Calu3 (cell line): ENCODE measurements at regions of chr12 and their contacts with region 1.

Region 1: GRCh38 chr12:87827638-87828264 is 201.4 kb downstream of the C12orf50 start:
- DNase-seq: no peak
- H3K4me3 Mint-ChIP-seq: no peak overlapping the region
- H3K27ac Mint-ChIP-seq: peak overlapping the region; percentile 43
- H3K4me1 Mint-ChIP-seq: peaks cover 42% of the 10 kb centered on the region
- H3K27me3 Mint-ChIP-seq: no peaks in the 10 kb centered on the region
- CTCF ChIP-seq: no peak

Region 2: GRCh38 chr12:87687362-87687761 is 140.4 kb before region 1 on chr12:
- CTCF ChIA-PET with region 1: no interaction called
- intact Hi-C with region 1: loop called (anchors 5 kb)
- DNase-seq: peak; percentile 50
- H3K4me3 Mint-ChIP-seq: no peak overlapping the region
- H3K27ac Mint-ChIP-seq: peak overlapping the region; percentile 66
- H3K4me1 Mint-ChIP-seq: peaks cover 19% of the 10 kb centered on the region
- H3K27me3 Mint-ChIP-seq: no peaks in the 10 kb centered on the region
- CTCF ChIP-seq: no peak

Region 3: DNA sequence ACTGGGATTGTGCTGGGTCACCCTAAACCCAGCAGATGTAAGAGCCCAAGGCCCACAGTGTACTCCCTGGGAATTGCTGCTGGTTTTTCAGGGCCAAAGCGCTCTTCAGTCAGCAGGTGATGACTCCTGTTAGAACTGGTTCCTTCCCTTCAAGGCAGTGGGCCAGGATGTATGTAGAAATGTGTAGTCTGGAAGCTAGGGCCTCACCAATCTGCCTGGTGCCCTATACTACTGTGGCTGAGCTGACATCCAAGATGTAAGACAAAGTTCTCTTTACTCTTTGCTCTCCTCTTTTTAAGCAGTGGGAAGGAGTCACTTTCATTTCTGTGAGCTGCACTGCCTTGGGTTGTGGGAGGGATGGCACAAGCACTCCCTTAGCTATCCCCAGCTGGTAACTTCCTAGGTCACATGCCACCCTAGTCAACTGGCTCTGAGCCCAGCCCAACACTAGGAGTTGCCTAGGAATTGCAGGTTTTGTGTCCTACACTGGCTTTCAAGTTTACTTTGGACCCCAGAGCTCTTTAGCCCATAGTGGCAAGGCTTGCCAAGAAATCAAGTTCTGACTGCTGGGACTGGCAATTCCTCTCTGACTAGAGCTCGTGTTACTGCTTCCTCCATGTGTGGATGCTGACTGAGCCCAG is 47.8 kb before region 1 on chr12:
- CTCF ChIA-PET with region 1: no interaction called
- intact Hi-C with region 1: no loop called
- DNase-seq: no peak
- H3K4me3 Mint-ChIP-seq: no peak overlapping the region
- H3K27ac Mint-ChIP-seq: no peak overlapping the region
- H3K4me1 Mint-ChIP-seq: peaks cover 18% of the 10 kb centered on the region
- H3K27me3 Mint-ChIP-seq: no peaks in the 10 kb centered on the region
- CTCF ChIP-seq: no peak

Region 4: DNA sequence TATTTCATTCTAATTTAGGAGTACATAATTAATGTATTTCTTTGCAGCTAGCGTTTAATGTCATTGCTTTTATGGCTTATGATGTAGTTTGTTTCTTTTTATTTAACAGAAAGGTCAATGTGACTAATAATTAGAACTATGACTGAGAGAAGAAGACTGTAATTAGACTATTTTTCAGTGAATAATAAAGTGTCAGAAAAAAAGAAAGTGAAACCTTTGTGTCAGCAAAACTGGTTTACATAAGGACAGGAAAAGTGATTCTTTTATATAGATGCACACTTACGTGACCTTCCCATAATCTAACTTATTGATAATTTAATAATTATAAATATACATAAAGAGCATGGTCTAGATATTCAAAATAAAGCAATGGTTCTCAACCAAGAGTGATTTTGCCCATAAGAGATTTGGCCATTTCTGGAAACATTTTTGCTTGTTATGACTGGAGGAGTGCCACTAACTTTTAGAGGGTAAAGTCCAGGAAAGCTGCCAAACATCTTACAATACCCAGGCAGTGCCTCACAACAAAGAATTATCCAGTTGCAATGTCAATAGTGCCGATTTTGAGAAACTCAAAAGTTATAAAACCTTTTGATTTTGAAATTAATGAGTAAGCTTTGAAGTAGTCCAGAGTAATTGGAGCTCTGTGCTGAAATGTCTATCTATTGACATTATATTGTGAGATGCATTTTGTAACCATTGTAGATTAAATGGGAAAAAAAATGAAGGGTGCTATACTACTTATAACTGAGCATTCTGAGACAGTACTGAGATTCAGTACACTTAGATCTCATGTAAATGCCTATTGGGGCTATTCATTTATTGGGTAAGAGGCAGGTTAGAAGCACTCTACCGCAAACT is 25.7 kb before region 1 on chr12:
- CTCF ChIA-PET with region 1: no interaction called
- intact Hi-C with region 1: loop called (anchors 2 kb)
- DNase-seq: no peak
- H3K4me3 Mint-ChIP-seq: no peak overlapping the region
- H3K27ac Mint-ChIP-seq: no peak overlapping the region
- H3K4me1 Mint-ChIP-seq: peaks cover 34% of the 10 kb centered on the region
- H3K27me3 Mint-ChIP-seq: no peaks in the 10 kb centered on the region
- CTCF ChIP-seq: no peak